ENCODE measurements at regions of chr2 and their contacts with region 1.

Region 1: GRCh38 chr2:25878361-25879132 is at the start of gene ASXL2:
- DNase-seq: peak; percentile 98
- H3K4me3 ChIP-seq: peak within 1 kb of the TSS; percentile 97
- H3K27ac ChIP-seq: peak within 1 kb of the TSS; percentile 92
- H3K4me1 ChIP-seq: peaks cover 20% of the 10 kb centered on the region
- H3K27me3 ChIP-seq: no peaks in the 10 kb centered on the region
- CTCF ChIP-seq: no peak
- total RNA-seq, gene ASXL2: 32.8 and 34.5 TPM in 2 replicates

Region 2: DNA sequence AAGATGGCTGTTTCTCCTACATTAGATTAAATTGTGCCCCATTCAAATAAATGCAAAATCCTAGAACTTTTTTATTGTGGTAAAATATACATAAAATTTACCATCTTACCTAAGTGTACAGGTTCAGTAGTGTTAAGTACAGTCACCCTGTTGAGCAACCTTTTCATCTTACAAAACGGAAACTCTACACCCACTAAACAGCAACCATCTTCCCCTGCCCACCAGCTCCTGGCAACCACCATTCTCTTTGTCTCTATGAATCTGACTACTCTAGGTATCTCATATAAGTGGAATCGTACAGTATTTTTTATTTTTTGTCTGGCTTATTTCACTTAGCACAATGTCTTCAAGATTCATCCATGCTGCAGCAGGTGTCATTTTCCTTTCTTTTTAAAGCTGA is 53.3 kb before region 1 on chr2:
- CTCF ChIA-PET with region 1: no interaction called
- POLR2A ChIA-PET with region 1: no interaction called
- intact Hi-C with region 1: no loop called
- DNase-seq: no peak
- H3K4me3 ChIP-seq: no peak overlapping the region
- H3K27ac ChIP-seq: no peak overlapping the region
- H3K4me1 ChIP-seq: no peaks in the 10 kb centered on the region
- H3K27me3 ChIP-seq: no peaks in the 10 kb centered on the region
- CTCF ChIP-seq: no peak

Region 3: GRCh38 chr2:26269571-26270158 is 391.1 kb after region 1 on chr2:
- CTCF ChIA-PET with region 1: no interaction called
- POLR2A ChIA-PET with region 1: interaction called, 12 read pairs
- intact Hi-C with region 1: no loop called
- DNase-seq: no peak
- H3K4me3 ChIP-seq: no peak overlapping the region
- H3K27ac ChIP-seq: no peak overlapping the region
- H3K4me1 ChIP-seq: peaks cover 13% of the 10 kb centered on the region
- H3K27me3 ChIP-seq: no peaks in the 10 kb centered on the region
- CTCF ChIP-seq: no peak

Measured in A673 (cell line).